PC-9 (cell line): ENCODE measurements at regions of chr22 and their contacts with region 1.

Region 1: DNA sequence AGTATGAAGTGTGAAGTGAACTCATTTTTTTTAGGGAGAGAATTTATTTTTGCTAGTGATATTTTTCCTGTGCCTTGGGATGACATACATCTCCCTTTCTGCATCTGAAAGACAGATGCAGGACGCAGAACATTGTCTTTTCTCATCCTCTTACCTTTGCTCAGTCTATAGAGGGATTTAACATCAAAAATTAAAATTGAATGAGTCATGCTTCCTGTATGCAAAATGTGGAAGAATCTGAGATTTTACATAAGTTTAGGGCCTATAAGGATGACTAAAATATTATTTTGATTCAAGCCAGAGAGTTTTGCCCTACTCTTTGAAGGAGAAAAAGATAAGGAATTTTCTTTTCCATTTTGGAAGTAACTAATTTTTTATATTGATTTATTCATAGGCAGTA is 27.3 kb downstream of the XRCC6 start:
- DNase-seq: no peak
- H3K4me3 ChIP-seq: no peak overlapping the region
- H3K27ac ChIP-seq: peak overlapping the region; percentile 32; the same call in 1 of the 2 replicates
- H3K4me1 ChIP-seq: no peaks in the 10 kb centered on the region
- H3K27me3 ChIP-seq: no peaks in the 10 kb centered on the region
- CTCF ChIP-seq: no peak

Region 2: DNA sequence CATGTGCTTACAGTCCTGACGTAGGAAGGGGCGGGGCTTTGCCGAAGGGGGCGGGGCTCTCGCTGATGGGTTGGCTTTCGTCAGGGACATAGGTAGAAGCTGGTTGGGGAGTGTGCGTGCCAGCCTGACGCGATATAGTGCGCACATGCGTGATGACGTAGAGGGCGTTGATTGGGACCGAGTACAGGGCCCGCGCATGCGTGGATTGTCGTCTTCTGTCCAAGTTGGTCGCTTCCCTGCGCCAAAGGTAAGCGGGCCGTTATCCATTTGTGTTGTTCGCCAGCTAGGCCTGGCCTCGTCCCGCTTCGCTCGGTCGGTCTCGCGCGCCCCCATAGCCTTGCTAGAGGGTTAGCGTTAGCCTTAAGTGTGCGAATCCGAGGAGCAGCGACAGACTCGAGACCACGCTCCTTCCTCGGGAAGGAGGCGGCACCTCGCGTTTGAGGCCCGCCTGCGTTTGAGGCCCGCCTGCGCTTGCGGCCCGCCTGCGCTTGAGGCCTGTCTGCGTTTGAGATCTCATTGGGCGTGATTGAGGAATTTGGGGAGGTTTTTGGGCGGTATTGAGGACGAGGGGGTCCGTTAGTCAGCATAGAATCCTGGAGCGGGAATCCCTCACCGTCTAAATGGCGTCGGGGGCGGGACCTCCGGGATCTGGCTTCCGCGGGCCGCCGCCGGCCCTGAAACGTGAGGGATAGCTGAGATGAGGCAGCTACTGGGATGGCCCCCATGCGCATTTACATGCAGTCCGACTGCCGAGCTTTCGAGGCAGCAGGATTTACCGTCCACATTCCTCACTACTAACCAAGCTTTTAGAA is 27.1 kb before region 1 on chr22 and contains the start of gene XRCC6:
- CTCF ChIA-PET with region 1: no interaction called
- POLR2A ChIA-PET with region 1: interaction called, 29 read pairs
- intact Hi-C with region 1: no loop called
- DNase-seq: peak; percentile 99 to 100
- H3K4me3 ChIP-seq: peak within 1 kb of the TSS; percentile 90
- H3K27ac ChIP-seq: peak within 1 kb of the TSS; percentile 79
- H3K4me1 ChIP-seq: peaks cover 33% of the 10 kb centered on the region
- H3K27me3 ChIP-seq: no peaks in the 10 kb centered on the region
- CTCF ChIP-seq: no peak
- total RNA-seq, gene XRCC6: 386 and 486 TPM in 2 replicates

Region 3: GRCh38 chr22:41636467-41636866 is 12.0 kb before region 1 on chr22:
- CTCF ChIA-PET with region 1: interaction called, 3 read pairs
- POLR2A ChIA-PET with region 1: interaction called, 15 read pairs
- intact Hi-C with region 1: no loop called
- DNase-seq: no peak
- H3K4me3 ChIP-seq: no peak overlapping the region
- H3K27ac ChIP-seq: no peak overlapping the region
- H3K4me1 ChIP-seq: no peaks in the 10 kb centered on the region
- H3K27me3 ChIP-seq: no peaks in the 10 kb centered on the region
- CTCF ChIP-seq: no peak